A673 (cell line): ENCODE measurements at regions of chr10 and their contacts with region 1.

Region 1: DNA sequence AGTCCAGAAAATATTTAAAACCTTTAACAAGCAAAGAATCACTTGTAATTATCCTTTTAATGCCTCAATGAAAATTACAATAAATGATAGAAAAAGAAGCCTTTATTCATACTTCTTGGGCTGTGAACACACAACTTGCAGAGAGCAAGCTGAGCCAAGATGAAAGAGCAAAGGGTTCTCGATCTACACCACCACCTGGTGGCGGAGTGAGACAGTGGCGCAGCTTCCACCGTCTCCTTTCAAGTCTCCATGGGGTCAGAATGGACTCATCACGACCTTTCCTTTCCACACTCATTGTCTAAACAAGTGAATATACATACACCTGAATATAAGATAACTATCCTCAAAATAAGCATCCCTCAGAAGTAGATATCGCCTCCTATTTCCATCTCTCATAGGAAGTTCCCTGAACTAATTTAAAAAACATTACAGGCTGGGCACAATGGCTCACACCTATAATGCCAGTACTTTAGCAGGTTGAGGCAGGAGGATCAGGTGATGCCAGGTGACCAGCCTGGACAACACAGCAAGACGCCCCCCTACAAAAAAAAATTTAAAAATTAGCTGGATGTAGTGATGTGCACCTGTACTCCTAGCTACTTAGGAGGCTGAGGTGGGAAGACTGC is 40.7 kb downstream of the ATE1 start:
- DNase-seq: peak; percentile 68
- H3K4me3 ChIP-seq: no peak overlapping the region
- H3K27ac ChIP-seq: no peak overlapping the region
- H3K4me1 ChIP-seq: no peaks in the 10 kb centered on the region
- H3K27me3 ChIP-seq: no peaks in the 10 kb centered on the region
- CTCF ChIP-seq: peak; percentile 84

Region 2: GRCh38 chr10:121741248-121741792 is 145.8 kb before region 1 on chr10:
- CTCF ChIA-PET with region 1: no interaction called
- POLR2A ChIA-PET with region 1: no interaction called
- intact Hi-C with region 1: loop called (anchors 10 kb)
- DNase-seq: no peak
- H3K4me3 ChIP-seq: no peak overlapping the region
- H3K27ac ChIP-seq: no peak overlapping the region
- H3K4me1 ChIP-seq: no peaks in the 10 kb centered on the region
- H3K27me3 ChIP-seq: no peaks in the 10 kb centered on the region
- CTCF ChIP-seq: no peak

Region 3: DNA sequence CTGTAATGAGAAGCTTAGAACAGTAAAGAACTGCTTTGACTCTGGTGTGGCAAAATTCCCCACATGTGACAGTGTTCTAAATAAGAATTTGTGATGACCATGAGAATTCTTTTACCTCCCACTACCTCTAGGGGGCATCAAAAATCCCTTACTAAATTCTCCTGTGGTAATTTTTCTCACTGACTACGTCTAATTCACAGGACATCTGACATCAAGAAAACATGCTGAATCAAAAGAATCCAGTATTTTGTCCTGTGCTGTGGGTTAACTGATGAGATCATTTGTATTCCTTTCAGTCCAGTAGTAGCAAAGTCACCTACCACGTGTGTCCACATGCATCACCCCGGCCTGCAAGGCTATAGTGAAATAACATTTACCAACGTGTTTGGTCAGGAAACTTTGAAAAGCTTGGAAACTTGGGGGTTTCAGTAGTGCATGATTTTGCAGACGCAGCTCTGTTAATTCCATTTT is 63.1 kb before region 1 on chr10:
- CTCF ChIA-PET with region 1: interaction called, 5 read pairs
- POLR2A ChIA-PET with region 1: no interaction called
- intact Hi-C with region 1: loop called (anchors 1 kb)
- DNase-seq: peak; percentile 62
- H3K4me3 ChIP-seq: no peak overlapping the region
- H3K27ac ChIP-seq: no peak overlapping the region
- H3K4me1 ChIP-seq: no peaks in the 10 kb centered on the region
- H3K27me3 ChIP-seq: no peaks in the 10 kb centered on the region
- CTCF ChIP-seq: peak; percentile 78